Esophagus squamous epithelium (tissue), 5 donors: ENCODE measurements at regions of chr22 and their contacts with region 1.

Region 1: GRCh38 chr22:28594797-28595462 is 84.7 kb downstream of the TTC28 start:
- DNase-seq: no peak
- H3K4me3 ChIP-seq: no peak overlapping the region
- H3K27ac ChIP-seq: no peak overlapping the region
- H3K4me1 ChIP-seq: peaks cover 0 to 5% (median 0%) of the 10 kb centered on the region in 3 donors
- H3K27me3 ChIP-seq: no peaks in the 10 kb centered on the region
- CTCF ChIP-seq: peak; percentile 19 to 87 (median 74)
- POLR2A ChIP-seq: no peak

Region 2: GRCh38 chr22:28019881-28020871 is 574.8 kb before region 1 on chr22:
- intact Hi-C with region 1: loop called (anchors 10 kb)
- DNase-seq: no peak
- H3K4me3 ChIP-seq: no peak overlapping the region
- H3K27ac ChIP-seq: peak overlapping the region in 3 of 4 donors; percentile 17 to 58 (median 43)
- H3K4me1 ChIP-seq: peaks cover 27 to 80% (median 31%) of the 10 kb centered on the region in 3 donors
- H3K27me3 ChIP-seq: no peaks in the 10 kb centered on the region
- CTCF ChIP-seq: peak; percentile 67 to 96 (median 92)
- POLR2A ChIP-seq: no peak

Region 3: DNA sequence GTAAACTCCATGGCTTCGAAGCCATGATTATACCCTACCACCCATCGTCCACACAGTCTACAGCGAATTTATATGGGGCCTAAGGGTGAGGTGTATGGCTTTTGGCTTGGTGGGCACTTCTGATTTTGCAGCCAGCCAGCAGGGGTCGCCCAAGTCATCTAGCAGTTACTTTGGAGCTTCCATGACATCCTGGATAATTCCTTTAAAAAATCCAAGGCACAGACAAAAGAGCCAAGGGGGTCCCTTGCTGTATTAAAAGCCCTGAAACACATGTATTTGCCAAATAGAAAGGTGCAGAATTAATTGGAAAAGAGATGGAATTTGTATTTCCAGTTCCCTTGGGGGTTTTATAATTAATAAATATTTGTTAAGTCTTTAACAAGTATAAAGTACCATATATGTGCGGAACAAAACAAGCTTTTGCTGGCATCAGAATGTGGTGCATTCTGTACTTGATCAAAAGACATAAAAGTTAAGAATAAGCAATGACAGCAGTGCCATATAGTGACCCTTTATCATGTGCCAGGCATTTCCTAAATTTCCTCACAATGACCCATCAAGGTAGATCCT is 543.1 kb before region 1 on chr22:
- intact Hi-C with region 1: loop called (anchors 5 kb)
- DNase-seq: no peak
- H3K4me3 ChIP-seq: no peak overlapping the region
- H3K27ac ChIP-seq: peak overlapping the region in 1 of 4 donors; percentile 40
- H3K4me1 ChIP-seq: peaks cover 0 to 18% (median 0%) of the 10 kb centered on the region in 3 donors
- H3K27me3 ChIP-seq: no peaks in the 10 kb centered on the region
- CTCF ChIP-seq: peak; percentile 36 to 84 (median 78)
- POLR2A ChIP-seq: no peak

Region 4: GRCh38 chr22:28438183-28438768 is 156.7 kb before region 1 on chr22:
- intact Hi-C with region 1: no loop called
- DNase-seq: no peak
- H3K4me3 ChIP-seq: no peak overlapping the region
- H3K27ac ChIP-seq: no peak overlapping the region
- H3K4me1 ChIP-seq: peaks cover 3 to 92% (median 4%) of the 10 kb centered on the region in 3 donors
- H3K27me3 ChIP-seq: no peaks in the 10 kb centered on the region
- CTCF ChIP-seq: no peak
- POLR2A ChIP-seq: no peak

Region 5: GRCh38 chr22:28450109-28450508 is 144.8 kb before region 1 on chr22:
- intact Hi-C with region 1: no loop called
- DNase-seq: no peak
- H3K4me3 ChIP-seq: no peak overlapping the region
- H3K27ac ChIP-seq: no peak overlapping the region
- H3K4me1 ChIP-seq: no peaks in the 10 kb centered on the region
- H3K27me3 ChIP-seq: no peaks in the 10 kb centered on the region
- CTCF ChIP-seq: no peak
- POLR2A ChIP-seq: no peak

Region 6: DNA sequence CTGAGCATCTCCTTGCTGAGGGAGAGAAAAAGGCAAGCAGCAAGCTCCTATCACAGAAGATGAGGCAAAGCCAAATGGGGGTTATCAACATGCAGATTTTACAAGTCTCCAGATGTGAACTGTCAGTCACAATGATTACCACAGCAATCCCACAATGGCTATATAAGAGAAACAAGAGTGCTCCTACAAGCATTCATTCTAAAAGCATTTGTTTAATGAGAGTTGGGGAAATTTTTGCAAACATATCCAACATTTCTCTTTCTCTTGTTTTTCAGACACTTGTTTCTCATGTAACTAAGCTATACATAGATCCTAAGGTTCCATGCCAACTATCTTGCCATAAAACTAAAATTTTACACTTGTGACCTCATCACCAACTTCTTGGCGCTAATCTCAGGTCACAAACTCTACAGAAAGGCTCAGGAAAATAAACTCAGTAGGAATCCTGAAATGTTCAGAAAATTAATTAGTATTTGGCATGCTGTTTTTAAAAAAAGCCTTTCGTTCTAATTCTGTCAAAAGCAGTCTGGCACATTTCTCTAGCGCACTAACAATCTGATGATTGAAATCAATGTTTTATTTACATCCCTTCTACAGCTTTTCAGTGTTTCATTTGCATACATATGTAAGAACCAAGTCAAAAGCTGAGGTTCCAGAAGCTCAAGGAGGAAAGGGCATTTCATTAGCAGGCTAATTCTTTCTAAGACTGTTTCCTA is 114.8 kb before region 1 on chr22:
- intact Hi-C with region 1: no loop called
- DNase-seq: no peak
- H3K4me3 ChIP-seq: no peak overlapping the region
- H3K27ac ChIP-seq: no peak overlapping the region
- H3K4me1 ChIP-seq: no peaks in the 10 kb centered on the region
- H3K27me3 ChIP-seq: peaks cover 0 to 3% (median 0%) of the 10 kb centered on the region in 4 donors
- CTCF ChIP-seq: no peak
- POLR2A ChIP-seq: no peak